CD8-positive, alpha-beta T cell (primary cell): ENCODE measurements at regions of chr5 and their contacts with region 1.

Region 1: DNA sequence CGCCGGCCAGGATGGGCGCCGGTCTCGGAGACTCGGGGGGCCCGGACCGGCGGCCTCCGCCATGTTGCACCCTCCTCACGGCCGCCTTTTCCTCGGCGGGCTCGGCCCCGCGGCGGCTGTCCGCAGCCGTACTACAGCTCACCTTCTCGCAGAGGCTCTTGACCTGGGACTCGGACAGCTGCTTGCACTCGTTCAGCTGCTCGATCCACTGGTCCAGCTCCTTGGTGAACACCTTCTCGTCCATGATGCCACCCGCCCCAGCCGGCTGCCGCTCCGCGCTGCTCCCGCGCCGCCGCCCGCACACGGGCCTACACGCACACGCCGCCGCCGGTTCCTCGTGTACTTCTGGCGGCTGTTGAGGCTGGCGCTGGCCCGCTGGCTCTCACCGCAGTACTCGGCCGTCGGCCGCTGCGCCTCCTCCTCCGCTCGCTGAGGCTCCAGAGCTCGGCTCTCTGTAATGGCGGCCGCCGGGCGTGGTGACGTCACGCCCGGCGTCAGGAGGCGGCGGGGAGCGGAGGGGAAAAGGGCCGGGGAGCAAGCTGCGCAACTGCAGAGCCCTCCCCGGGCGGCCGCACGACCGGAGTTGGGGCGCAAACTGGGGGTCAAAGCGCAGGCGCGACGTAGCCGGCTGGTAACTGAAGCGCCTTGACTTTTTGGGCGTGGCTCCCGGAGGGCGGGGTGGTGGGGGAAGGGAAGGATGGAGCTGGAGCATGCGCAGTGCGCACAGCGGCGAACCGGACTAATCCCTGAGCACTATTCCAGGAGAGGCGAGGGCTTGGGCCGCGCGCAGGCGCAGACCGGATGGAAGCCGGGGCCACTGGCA is at the start of gene PPP2CA:
- DNase-seq: peak; percentile 98 to 100 (median 99)
- ATAC-seq: peak; percentile 80
- H3K4me3 ChIP-seq: peak within 1 kb of the TSS; percentile 83 to 87
- H3K4me3 Mint-ChIP-seq: peak within 1 kb of the TSS; percentile 96
- H3K27ac ChIP-seq: peak within 1 kb of the TSS; percentile 95 to 96
- H3K27ac Mint-ChIP-seq: peak within 1 kb of the TSS; percentile 98
- H3K4me1 ChIP-seq: peaks cover 45% of the 10 kb centered on the region
- H3K4me1 Mint-ChIP-seq: peaks cover 50% of the 10 kb centered on the region
- H3K27me3 ChIP-seq: no peaks in the 10 kb centered on the region
- H3K27me3 Mint-ChIP-seq: no peaks in the 10 kb centered on the region
- CTCF ChIP-seq: no peak
- total RNA-seq, gene PPP2CA: 233 to 260 TPM

Region 2: DNA sequence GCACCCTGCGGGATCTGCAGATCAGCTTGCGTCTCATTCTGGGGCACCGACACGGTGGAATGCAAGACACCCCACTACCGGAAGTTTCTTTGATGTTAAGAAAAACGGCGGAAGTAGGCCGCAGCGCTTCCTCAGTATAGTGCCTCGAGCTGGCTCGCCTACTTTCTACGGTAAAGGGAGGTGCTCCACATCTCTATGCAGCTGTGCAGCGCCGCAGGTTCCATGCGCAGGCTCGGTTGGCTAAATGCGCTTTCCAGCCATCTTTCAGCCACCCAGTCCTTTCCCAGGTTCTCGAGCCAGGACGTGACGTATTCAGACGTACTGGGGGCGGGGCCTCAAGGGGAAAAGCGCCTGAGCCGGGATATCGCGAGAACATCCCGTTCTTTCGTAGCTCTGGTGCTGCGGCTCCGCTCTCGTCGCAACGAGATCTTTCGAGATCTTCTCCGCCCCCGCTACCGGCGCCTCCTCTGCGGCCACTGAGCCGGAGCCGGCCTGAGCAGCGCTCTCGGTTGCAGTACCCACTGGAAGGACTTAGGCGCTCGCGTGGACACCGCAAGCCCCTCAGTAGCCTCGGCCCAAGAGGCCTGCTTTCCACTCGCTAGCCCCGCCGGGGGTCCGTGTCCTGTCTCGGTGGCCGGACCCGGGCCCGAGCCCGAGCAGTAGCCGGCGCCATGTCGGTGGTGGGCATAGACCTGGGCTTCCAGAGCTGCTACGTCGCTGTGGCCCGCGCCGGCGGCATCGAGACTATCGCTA is 1174.1 kb before region 1 on chr5 and contains the start of gene HSPA4:
- CTCF ChIA-PET with region 1: no interaction called
- POLR2A ChIA-PET with region 1: no interaction called
- intact Hi-C with region 1: loop called in 1 of 2 experiments (anchors 10 kb)
- DNase-seq: peak; percentile 93 to 100 (median 97)
- ATAC-seq: peak; percentile 89
- H3K4me3 ChIP-seq: peak within 1 kb of the TSS; percentile 88 to 100
- H3K4me3 Mint-ChIP-seq: peak within 1 kb of the TSS; percentile 99
- H3K27ac ChIP-seq: peak within 1 kb of the TSS; percentile 97
- H3K27ac Mint-ChIP-seq: peak within 1 kb of the TSS; percentile 100
- H3K4me1 ChIP-seq: peaks cover 46% of the 10 kb centered on the region
- H3K4me1 Mint-ChIP-seq: peaks cover 56% of the 10 kb centered on the region
- H3K27me3 ChIP-seq: no peaks in the 10 kb centered on the region
- H3K27me3 Mint-ChIP-seq: no peaks in the 10 kb centered on the region
- CTCF ChIP-seq: no peak
- total RNA-seq, gene HSPA4: 24.4 to 29.7 TPM

Region 3: DNA sequence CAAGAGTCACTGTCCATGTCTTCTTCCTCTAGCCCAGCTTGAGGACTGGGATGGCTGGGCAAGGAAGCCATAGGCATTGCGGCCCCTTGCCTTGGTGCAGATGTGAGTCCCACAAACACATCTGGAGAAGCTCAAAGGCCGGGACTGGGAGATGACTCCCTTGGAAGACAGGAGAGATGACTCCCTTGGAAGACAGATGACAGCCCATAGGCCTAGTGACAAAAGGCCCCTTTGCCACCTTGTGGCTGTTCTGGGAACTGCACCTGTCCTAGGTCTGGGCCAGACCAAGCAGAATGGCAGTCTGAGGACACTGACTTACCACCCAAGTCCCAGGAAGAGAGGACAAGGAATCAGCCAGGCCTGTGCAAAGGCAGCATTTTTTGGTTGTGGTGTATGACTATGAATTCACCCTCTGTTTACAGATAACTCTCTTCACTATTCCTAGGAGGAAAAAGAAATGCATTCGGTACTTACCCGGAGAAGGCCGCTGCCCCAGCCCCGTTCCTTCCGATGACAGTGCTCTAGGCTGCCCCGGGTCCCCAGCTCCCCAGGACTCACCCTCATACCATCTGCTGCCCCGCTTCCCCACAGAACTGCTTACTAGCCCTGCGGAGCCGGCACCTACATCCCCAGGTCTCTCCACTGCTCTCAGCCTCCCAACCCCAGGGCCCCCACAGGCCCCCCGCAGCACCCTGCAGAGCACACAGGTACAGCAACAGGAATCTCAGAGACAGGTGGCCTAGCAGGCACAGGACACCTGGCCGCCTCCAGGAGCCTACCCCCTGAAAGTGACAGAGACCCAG is 79.8 kb before region 1 on chr5:
- CTCF ChIA-PET with region 1: no interaction called
- POLR2A ChIA-PET with region 1: interaction called, 12 read pairs
- intact Hi-C with region 1: no loop called
- DNase-seq: peak; percentile 73 to 91 (median 84)
- ATAC-seq: peak; percentile 72
- H3K4me3 ChIP-seq: no peak overlapping the region
- H3K4me3 Mint-ChIP-seq: no peak overlapping the region
- H3K27ac ChIP-seq: peak overlapping the region in 1 of 2 experiments; percentile 37
- H3K27ac Mint-ChIP-seq: peak overlapping the region; percentile 83
- H3K4me1 ChIP-seq: peaks cover 22% of the 10 kb centered on the region
- H3K4me1 Mint-ChIP-seq: peaks cover 69% of the 10 kb centered on the region
- H3K27me3 ChIP-seq: no peaks in the 10 kb centered on the region
- H3K27me3 Mint-ChIP-seq: no peaks in the 10 kb centered on the region
- CTCF ChIP-seq: peak; percentile 86

Region 4: GRCh38 chr5:134204575-134204974 is 21.3 kb before region 1 on chr5:
- CTCF ChIA-PET with region 1: interaction called, 8 read pairs
- POLR2A ChIA-PET with region 1: interaction called, 8 read pairs
- intact Hi-C with region 1: loop called in 1 of 2 experiments (anchors 2 kb)
- DNase-seq: no peak
- ATAC-seq: no peak
- H3K4me3 ChIP-seq: no peak overlapping the region
- H3K4me3 Mint-ChIP-seq: no peak overlapping the region
- H3K27ac ChIP-seq: no peak overlapping the region
- H3K27ac Mint-ChIP-seq: no peak overlapping the region
- H3K4me1 ChIP-seq: peaks cover 22% of the 10 kb centered on the region
- H3K4me1 Mint-ChIP-seq: peaks cover 47% of the 10 kb centered on the region
- H3K27me3 ChIP-seq: no peaks in the 10 kb centered on the region
- H3K27me3 Mint-ChIP-seq: no peaks in the 10 kb centered on the region
- CTCF ChIP-seq: no peak

Region 5: GRCh38 chr5:134370871-134371833 is 145.3 kb after region 1 on chr5 and contains the start of gene UBE2B:
- CTCF ChIA-PET with region 1: interaction called, 3 read pairs
- POLR2A ChIA-PET with region 1: interaction called, 9 read pairs
- intact Hi-C with region 1: loop called (anchors 1 kb)
- DNase-seq: peak; percentile 93 to 100 (median 98)
- ATAC-seq: peak; percentile 72
- H3K4me3 ChIP-seq: peak within 1 kb of the TSS; percentile 88 to 100
- H3K4me3 Mint-ChIP-seq: peak within 1 kb of the TSS; percentile 91
- H3K27ac ChIP-seq: peak within 1 kb of the TSS; percentile 98 to 99
- H3K27ac Mint-ChIP-seq: peak within 1 kb of the TSS; percentile 99
- H3K4me1 ChIP-seq: peaks cover 39% of the 10 kb centered on the region
- H3K4me1 Mint-ChIP-seq: peaks cover 55% of the 10 kb centered on the region
- H3K27me3 ChIP-seq: no peaks in the 10 kb centered on the region
- H3K27me3 Mint-ChIP-seq: no peaks in the 10 kb centered on the region
- CTCF ChIP-seq: no peak
- total RNA-seq, gene UBE2B: 249 to 250 TPM

Region 6: DNA sequence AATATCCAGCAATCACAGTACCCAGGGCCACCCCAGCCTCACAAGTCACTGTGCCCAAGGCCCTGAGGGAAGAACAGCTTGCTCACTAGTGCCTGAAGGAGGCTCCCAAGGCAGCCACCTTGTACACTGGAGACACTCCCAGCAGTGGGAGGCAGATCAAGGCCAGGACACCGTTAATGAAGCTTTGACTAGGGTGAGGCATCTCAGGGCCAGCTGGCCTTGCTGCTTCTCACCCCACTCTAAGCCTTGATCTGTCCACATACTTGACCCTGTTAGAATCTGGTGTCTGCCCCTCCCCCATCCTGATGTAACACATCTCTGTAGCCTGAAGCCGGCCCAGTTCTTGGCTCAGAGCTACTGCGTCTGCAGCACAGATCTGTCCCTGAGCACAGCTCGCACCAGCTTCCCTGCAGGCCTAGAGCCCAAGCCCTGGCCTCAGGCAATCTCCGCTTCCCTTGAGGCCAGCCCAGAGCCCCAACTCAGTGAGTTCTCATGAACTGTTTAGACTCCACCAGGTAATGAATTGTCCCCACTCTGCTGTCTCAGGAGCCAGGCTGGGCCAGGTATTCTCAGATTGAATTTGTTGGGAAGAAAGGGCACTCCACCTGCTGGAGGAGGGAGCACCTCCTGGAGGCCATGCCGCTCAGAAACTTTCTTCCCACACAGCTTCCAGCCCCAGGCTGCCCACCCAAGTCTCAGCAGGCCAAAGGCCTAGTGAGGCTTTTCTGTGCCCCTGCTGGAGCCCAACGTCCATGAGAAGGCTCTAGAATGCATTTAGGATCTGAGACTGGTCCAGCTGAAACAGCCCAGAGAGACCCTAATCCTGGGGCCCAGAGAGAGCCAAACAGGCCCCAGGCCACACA is 286.2 kb after region 1 on chr5:
- CTCF ChIA-PET with region 1: no interaction called
- POLR2A ChIA-PET with region 1: no interaction called
- intact Hi-C with region 1: no loop called
- DNase-seq: no peak
- ATAC-seq: no peak
- H3K4me3 ChIP-seq: no peak overlapping the region
- H3K4me3 Mint-ChIP-seq: no peak overlapping the region
- H3K27ac ChIP-seq: no peak overlapping the region
- H3K27ac Mint-ChIP-seq: no peak overlapping the region
- H3K4me1 ChIP-seq: no peaks in the 10 kb centered on the region
- H3K4me1 Mint-ChIP-seq: peaks cover 5% of the 10 kb centered on the region
- H3K27me3 ChIP-seq: no peaks in the 10 kb centered on the region
- H3K27me3 Mint-ChIP-seq: no peaks in the 10 kb centered on the region
- CTCF ChIP-seq: no peak

Region 7: DNA sequence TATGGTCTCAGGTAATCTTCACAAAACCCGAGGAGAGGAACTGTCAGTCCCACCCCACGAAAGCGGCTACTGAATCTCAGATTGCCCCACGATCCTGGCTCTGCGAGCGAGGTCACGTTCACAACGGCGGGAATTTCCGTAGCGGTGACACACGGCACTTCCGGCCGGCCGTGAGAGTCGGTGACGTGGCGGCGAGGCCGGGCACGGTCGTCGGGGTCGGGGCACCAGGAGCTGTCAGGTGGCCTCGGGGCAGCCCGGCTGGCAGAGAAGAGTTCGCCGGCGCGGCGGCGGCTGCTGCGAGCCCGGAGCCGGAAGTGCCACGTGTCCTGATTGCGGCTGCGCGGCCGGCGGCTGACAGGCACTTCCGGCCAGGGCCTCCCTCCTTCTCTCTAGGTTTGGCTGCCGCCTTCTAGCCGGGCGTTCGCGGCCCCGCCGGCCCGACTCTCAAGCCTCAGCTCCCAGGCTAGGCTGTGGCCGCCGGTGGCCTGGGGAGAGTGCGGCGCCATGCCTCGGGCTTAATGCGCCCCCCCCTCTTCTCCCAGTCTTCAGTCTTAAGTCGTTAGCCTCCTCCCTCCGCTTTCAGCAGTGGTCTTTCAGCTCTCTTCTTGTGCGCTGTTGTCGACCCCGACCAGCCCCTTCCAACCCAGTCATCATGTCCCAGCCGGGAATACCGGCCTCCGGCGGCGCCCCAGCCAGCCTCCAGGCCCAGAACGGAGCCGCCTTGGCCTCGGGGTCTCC is 422.8 kb after region 1 on chr5 and contains the start of gene SEC24A:
- CTCF ChIA-PET with region 1: no interaction called
- POLR2A ChIA-PET with region 1: no interaction called
- intact Hi-C with region 1: loop called in 1 of 2 experiments (anchors 1 kb)
- DNase-seq: peak; percentile 75 to 98 (median 88)
- ATAC-seq: peak; percentile 77
- H3K4me3 ChIP-seq: peak within 1 kb of the TSS; percentile 74 to 98
- H3K4me3 Mint-ChIP-seq: peak within 1 kb of the TSS; percentile 96
- H3K27ac ChIP-seq: peak within 1 kb of the TSS; percentile 83 to 100
- H3K27ac Mint-ChIP-seq: peak within 1 kb of the TSS; percentile 99
- H3K4me1 ChIP-seq: peaks cover 12% of the 10 kb centered on the region
- H3K4me1 Mint-ChIP-seq: peaks cover 30% of the 10 kb centered on the region
- H3K27me3 ChIP-seq: no peaks in the 10 kb centered on the region
- H3K27me3 Mint-ChIP-seq: no peaks in the 10 kb centered on the region
- CTCF ChIP-seq: no peak
- total RNA-seq, gene SEC24A: 14.4 to 14.5 TPM